ENCODE measurements at regions of chr11 and their contacts with region 1.

Region 1: GRCh38 chr11:83140696-83141455 is 16.1 kb upstream of the PCF11 start:
- DNase-seq: no peak
- H3K4me3 ChIP-seq: no peak overlapping the region
- H3K27ac ChIP-seq: no peak overlapping the region
- H3K4me1 ChIP-seq: no peaks in the 10 kb centered on the region
- H3K27me3 ChIP-seq: no peaks in the 10 kb centered on the region
- CTCF ChIP-seq: no peak

Region 2: GRCh38 chr11:83241291-83241946 is 100.5 kb after region 1 on chr11:
- intact Hi-C with region 1: loop called (anchors 10 kb)
- DNase-seq: peak; percentile 55
- H3K4me3 ChIP-seq: no peak overlapping the region
- H3K27ac ChIP-seq: no peak overlapping the region
- H3K4me1 ChIP-seq: no peaks in the 10 kb centered on the region
- H3K27me3 ChIP-seq: no peaks in the 10 kb centered on the region
- CTCF ChIP-seq: peak; percentile 40

Region 3: GRCh38 chr11:83374311-83374710 is 233.4 kb after region 1 on chr11:
- intact Hi-C with region 1: no loop called
- DNase-seq: no peak
- H3K4me3 ChIP-seq: no peak overlapping the region
- H3K27ac ChIP-seq: no peak overlapping the region
- H3K4me1 ChIP-seq: no peaks in the 10 kb centered on the region
- H3K27me3 ChIP-seq: no peaks in the 10 kb centered on the region
- CTCF ChIP-seq: no peak